ENCODE measurements at regions of chrX and their contacts with region 1.

Region 1: DNA sequence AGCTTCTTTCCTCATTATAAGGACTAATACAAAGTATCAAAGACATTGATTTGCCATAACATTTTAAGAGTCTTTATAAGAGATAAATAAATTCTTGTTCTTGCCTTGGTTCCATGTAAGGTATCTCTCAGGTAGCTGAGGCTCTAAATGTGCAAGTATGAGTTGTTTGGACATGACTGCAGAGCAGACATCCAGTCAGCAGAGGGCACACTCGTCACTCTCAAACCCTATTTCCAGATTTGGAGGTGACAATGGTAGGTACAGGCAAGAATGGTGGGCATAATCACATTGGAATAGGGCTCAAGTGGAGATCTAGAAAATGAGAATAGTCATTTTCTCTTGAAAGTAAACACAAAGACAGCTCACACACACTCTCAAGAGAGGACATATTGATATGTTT is 133.3 kb upstream of the ZIC3 start:
- DNase-seq: peak; percentile 18 to 35 (median 28)
- ATAC-seq: peak; percentile 74
- H3K4me3 ChIP-seq: no peak overlapping the region
- H3K27ac ChIP-seq: no peak overlapping the region
- H3K4me1 ChIP-seq: peaks cover 0 to 6% of the 10 kb centered on the region in 2 experiments; a peak in 2 of 5 replicates
- H3K27me3 ChIP-seq: peaks cover 6 to 16% of the 10 kb centered on the region in 2 experiments; a peak in 3 of 5 replicates
- CTCF ChIP-seq: peak; percentile 31 to 60 (median 55); a peak in 5 of 6 replicates
- EP300 ChIP-seq: no peak
- POLR2A ChIP-seq: no peak
- RAD21 ChIP-seq: peak; percentile 58

Region 2: GRCh38 chrX:137137502-137137901 is 295.1 kb before region 1 on chrX:
- CTCF ChIA-PET with region 1: no interaction called
- POLR2A ChIA-PET with region 1: no interaction called
- in situ Hi-C with region 1: no loop called
- intact Hi-C with region 1: no loop called
- DNase-seq: no peak
- ATAC-seq: no peak
- H3K4me3 ChIP-seq: no peak overlapping the region
- H3K27ac ChIP-seq: no peak overlapping the region
- H3K4me1 ChIP-seq: no peaks in the 10 kb centered on the region
- H3K27me3 ChIP-seq: no peaks in the 10 kb centered on the region
- CTCF ChIP-seq: no peak
- EP300 ChIP-seq: no peak
- POLR2A ChIP-seq: no peak
- RAD21 ChIP-seq: no peak

Region 3: DNA sequence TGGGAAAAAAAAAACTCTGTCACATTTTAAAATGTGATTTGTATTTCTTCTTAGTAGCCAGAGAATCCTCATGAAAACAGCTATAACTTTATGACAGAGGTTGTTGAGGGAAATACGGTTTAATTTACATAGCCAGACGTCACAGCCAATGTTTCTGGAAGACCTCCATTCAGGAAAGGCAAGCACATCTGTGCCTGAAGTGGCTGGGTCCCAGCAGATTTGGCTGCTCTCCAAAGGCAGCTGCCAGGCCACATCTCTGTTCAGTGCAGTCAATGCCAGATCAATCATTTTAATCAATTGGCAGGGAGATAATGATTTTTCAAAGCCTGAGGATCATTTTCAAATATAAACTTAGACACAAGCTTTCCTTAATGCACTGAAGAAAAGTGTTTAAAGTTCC is 46.8 kb after region 1 on chrX:
- CTCF ChIA-PET with region 1: no interaction called
- POLR2A ChIA-PET with region 1: no interaction called
- in situ Hi-C with region 1: no loop called
- intact Hi-C with region 1: no loop called
- DNase-seq: no peak
- ATAC-seq: no peak
- H3K4me3 ChIP-seq: no peak overlapping the region
- H3K27ac ChIP-seq: no peak overlapping the region
- H3K4me1 ChIP-seq: no peaks in the 10 kb centered on the region
- H3K27me3 ChIP-seq: no peaks in the 10 kb centered on the region
- CTCF ChIP-seq: no peak
- EP300 ChIP-seq: no peak
- POLR2A ChIP-seq: no peak
- RAD21 ChIP-seq: no peak

Region 4: GRCh38 chrX:137926090-137926489 is 493.5 kb after region 1 on chrX:
- CTCF ChIA-PET with region 1: no interaction called
- POLR2A ChIA-PET with region 1: no interaction called
- in situ Hi-C with region 1: no loop called
- intact Hi-C with region 1: loop called (anchors 10 kb)
- DNase-seq: peak in 1 of 4 experiments; percentile 5
- ATAC-seq: no peak
- H3K4me3 ChIP-seq: no peak overlapping the region
- H3K27ac ChIP-seq: no peak overlapping the region
- H3K4me1 ChIP-seq: no peaks in the 10 kb centered on the region
- H3K27me3 ChIP-seq: no peaks in the 10 kb centered on the region
- CTCF ChIP-seq: peak; percentile 9 to 39 (median 23); a peak in 2 of 6 replicates
- EP300 ChIP-seq: no peak
- POLR2A ChIP-seq: no peak
- RAD21 ChIP-seq: peak; percentile 49 to 59; a peak in 3 of 4 replicates

Region 5: DNA sequence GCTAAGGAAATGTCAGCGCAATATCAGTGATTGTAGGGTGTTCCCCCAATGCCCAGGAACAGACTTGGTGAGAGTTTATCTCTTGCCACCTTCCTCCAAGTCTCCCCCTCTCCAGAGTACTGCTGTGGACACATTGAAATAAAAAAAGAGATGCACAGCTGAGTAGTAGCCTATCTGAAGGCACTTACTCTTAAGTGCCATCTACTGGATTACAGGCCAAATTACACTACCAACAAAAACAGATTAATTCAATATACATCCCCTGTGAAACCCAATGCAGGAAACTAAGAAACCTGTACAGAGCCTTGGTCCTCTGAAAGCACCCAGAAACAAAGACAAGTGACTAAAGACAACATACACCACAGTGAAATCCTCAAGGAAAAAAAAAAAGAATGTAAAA is 593.6 kb after region 1 on chrX:
- CTCF ChIA-PET with region 1: no interaction called
- POLR2A ChIA-PET with region 1: no interaction called
- in situ Hi-C with region 1: no loop called
- intact Hi-C with region 1: loop called (anchors 10 kb)
- DNase-seq: peak in 2 of 4 experiments; percentile 3
- ATAC-seq: peak; percentile 47; the same call in 1 of the 3 replicates
- H3K4me3 ChIP-seq: no peak overlapping the region
- H3K27ac ChIP-seq: no peak overlapping the region
- H3K4me1 ChIP-seq: no peaks in the 10 kb centered on the region
- H3K27me3 ChIP-seq: no peaks in the 10 kb centered on the region
- CTCF ChIP-seq: peak in 2 of 3 experiments; percentile 39 to 40; a peak in 2 of 6 replicates
- EP300 ChIP-seq: no peak
- POLR2A ChIP-seq: no peak
- RAD21 ChIP-seq: peak in 1 of 2 experiments; percentile 35; a peak in 2 of 4 replicates